ENCODE measurements at regions of chr3 and their contacts with region 1.

Region 1: DNA sequence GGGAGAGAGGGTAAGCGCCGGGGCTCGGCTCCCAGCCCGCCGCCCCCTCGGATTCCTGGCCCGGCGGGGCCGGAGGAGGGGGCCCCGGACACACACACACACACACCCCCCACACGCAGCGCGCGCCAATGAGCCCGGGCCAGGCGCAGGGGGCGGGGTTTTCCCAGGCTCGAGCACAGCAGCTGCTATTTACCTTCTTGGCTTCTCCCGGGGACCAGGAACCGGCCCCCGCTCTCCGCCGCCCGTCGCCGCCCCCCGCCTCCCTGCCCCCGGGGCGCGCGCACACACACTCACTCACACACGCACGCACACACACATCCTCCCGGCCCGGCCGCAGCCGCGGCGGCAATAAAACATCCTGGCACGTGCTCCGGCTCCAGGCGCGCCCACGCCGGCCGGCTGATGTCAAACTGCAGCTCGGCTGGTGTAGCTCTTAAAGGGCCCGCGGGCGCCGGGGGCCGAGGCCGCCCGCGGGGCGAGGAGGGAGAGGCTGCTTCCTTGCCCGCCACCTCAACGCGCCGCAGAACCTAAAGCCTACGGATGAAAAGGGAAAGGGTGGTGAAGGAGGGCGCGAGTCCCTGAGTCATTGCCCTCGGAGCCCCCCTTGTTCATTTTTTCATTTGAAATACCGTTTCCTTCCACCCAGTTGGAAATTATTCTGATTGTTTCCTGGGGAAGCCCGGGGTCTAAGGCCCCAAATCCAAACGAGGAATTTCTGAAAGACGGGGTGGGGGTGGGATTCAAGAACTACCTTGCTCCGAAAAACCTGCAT is 1.0 kb upstream of the HES1 start:
- DNase-seq: peak; percentile 92 to 97 (median 96)
- ATAC-seq: peak; percentile 72
- H3K4me3 ChIP-seq: peak overlapping the region; percentile 43 to 65
- H3K27ac ChIP-seq: peak overlapping the region; percentile 90 to 93
- H3K4me1 ChIP-seq: peaks cover 30 to 69% of the 10 kb centered on the region in 2 donors
- H3K27me3 ChIP-seq: peaks cover 0 to 97% of the 10 kb centered on the region in 2 donors
- CTCF ChIP-seq: no peak

Region 2: DNA sequence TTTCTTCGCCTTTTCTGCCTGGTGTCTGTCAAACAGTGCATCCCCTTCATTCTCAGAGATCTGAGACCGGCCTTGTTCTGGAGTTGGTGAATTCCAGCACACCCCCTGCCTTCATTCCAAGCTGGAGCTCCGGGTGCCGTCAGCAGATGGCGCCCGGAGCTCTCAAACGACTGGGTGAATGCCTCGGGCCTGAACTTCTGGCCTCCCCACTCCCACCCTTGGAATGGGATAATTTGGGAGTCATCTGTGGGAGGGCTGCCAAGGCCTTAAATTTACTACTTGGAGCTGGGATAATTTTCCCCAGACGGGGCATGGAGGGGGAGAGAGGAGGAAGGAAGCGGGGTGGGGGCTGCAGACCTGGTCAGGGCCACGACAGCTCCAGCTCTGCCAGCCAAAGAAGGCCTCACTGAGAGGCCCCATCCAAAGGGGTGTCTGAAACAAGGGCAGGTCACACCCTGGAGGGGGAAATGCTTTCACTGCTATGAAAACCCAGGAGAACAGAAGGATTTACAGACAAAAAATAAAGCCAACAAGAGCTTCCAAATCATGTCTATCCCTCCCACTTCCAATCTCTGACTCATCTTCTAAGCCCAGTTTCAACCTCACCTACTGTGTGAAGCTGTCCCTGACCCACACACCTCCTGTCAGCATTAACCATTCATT is 354.0 kb before region 1 on chr3:
- intact Hi-C with region 1: loop called in 1 of 2 experiments (anchors 5 kb)
- DNase-seq: peak in 3 of 4 donors; percentile 66 to 88 (median 72)
- ATAC-seq: peak; percentile 89
- H3K4me3 ChIP-seq: no peak overlapping the region
- H3K27ac ChIP-seq: no peak overlapping the region
- H3K4me1 ChIP-seq: peaks cover 6 to 11% of the 10 kb centered on the region in 2 donors
- H3K27me3 ChIP-seq: peaks cover 6 to 44% of the 10 kb centered on the region in 2 donors
- CTCF ChIP-seq: peak; percentile 65 to 73

Region 3: GRCh38 chr3:193791671-193792045 is 343.3 kb before region 1 on chr3:
- intact Hi-C with region 1: loop called in 1 of 2 experiments (anchors 5 kb)
- DNase-seq: peak in 2 of 4 donors; percentile 76 to 86
- ATAC-seq: peak; percentile 84
- H3K4me3 ChIP-seq: no peak overlapping the region
- H3K27ac ChIP-seq: peak overlapping the region in 1 of 2 donors; percentile 20
- H3K4me1 ChIP-seq: peaks cover 11 to 17% of the 10 kb centered on the region in 2 donors
- H3K27me3 ChIP-seq: peaks cover 0 to 5% of the 10 kb centered on the region in 2 donors
- CTCF ChIP-seq: no peak

Region 4: GRCh38 chr3:193982258-193982659 is 152.7 kb before region 1 on chr3:
- intact Hi-C with region 1: no loop called
- DNase-seq: peak in 2 of 4 donors; percentile 59 to 84
- ATAC-seq: peak; percentile 60
- H3K4me3 ChIP-seq: no peak overlapping the region
- H3K27ac ChIP-seq: no peak overlapping the region
- H3K4me1 ChIP-seq: peaks cover 7 to 24% of the 10 kb centered on the region in 2 donors
- H3K27me3 ChIP-seq: no peaks in the 10 kb centered on the region
- CTCF ChIP-seq: no peak

Region 5: GRCh38 chr3:194003125-194004057 is 131.6 kb before region 1 on chr3:
- intact Hi-C with region 1: loop called in 1 of 2 experiments (anchors 10 kb)
- DNase-seq: peak; percentile 57 to 95 (median 82)
- ATAC-seq: peak; percentile 91
- H3K4me3 ChIP-seq: peak overlapping the region; percentile 12 to 47
- H3K27ac ChIP-seq: peak overlapping the region; percentile 80 to 94
- H3K4me1 ChIP-seq: peaks cover 18 to 45% of the 10 kb centered on the region in 2 donors
- H3K27me3 ChIP-seq: peaks cover 0 to 19% of the 10 kb centered on the region in 2 donors
- CTCF ChIP-seq: no peak

Region 6: GRCh38 chr3:194023501-194024280 is 111.3 kb before region 1 on chr3:
- intact Hi-C with region 1: no loop called
- DNase-seq: no peak
- ATAC-seq: no peak
- H3K4me3 ChIP-seq: no peak overlapping the region
- H3K27ac ChIP-seq: no peak overlapping the region
- H3K4me1 ChIP-seq: no peaks in the 10 kb centered on the region
- H3K27me3 ChIP-seq: no peaks in the 10 kb centered on the region
- CTCF ChIP-seq: no peak

Region 7: DNA sequence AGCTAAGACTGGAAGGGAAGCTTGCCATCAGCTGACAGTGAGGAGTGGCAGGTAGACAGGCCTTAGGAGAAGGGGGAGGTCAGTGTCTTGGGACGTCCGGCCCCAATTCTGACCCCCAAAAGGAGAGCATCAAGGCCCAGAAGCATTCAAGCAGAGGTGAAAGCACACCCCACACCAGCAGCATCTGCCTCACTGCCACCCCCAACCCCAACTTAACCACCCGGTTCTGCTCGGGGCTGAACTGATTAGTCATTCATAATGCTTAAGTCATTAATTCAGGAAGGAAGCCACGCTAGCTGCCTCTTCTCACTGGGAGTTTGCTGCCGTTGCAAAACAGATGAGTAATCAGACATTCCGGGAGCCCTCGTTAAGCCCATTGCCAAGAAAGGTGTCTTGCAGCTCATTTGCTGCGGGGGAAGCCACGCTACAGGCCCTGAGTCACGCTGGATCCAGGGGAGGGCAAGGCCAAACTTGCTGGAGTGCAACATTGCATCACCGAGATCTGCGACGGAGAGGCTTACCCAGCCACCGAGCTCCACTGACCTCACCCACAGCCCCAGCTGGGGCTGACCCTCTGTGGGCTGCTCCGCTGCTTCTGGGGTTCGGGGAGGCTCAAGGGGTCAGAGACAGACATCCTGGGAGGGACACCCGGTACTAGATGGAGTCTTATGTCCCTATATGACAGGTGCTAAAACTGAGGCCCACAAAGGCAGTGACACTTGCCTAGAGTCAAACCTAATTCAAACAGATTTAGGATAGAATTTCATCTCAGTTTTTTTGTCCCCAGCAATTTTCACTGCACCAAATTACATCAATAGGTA is 45.4 kb before region 1 on chr3:
- intact Hi-C with region 1: loop called in 1 of 2 experiments (anchors 10 kb)
- DNase-seq: peak in 2 of 4 donors; percentile 92 to 95
- ATAC-seq: peak; percentile 91
- H3K4me3 ChIP-seq: no peak overlapping the region
- H3K27ac ChIP-seq: peak overlapping the region; percentile 42 to 89
- H3K4me1 ChIP-seq: peaks cover 12 to 29% of the 10 kb centered on the region in 2 donors
- H3K27me3 ChIP-seq: no peaks in the 10 kb centered on the region
- CTCF ChIP-seq: no peak

Region 8: GRCh38 chr3:194103983-194104751 is 30.8 kb before region 1 on chr3:
- intact Hi-C with region 1: no loop called
- DNase-seq: no peak
- ATAC-seq: no peak
- H3K4me3 ChIP-seq: no peak overlapping the region
- H3K27ac ChIP-seq: no peak overlapping the region
- H3K4me1 ChIP-seq: peaks cover 0 to 6% of the 10 kb centered on the region in 2 donors
- H3K27me3 ChIP-seq: no peaks in the 10 kb centered on the region
- CTCF ChIP-seq: no peak

Region 9: GRCh38 chr3:194265483-194265892 is 130.5 kb after region 1 on chr3:
- intact Hi-C with region 1: loop called in 1 of 2 experiments (anchors 5 kb)
- DNase-seq: peak; percentile 76 to 91 (median 84)
- ATAC-seq: peak; percentile 73
- H3K4me3 ChIP-seq: no peak overlapping the region
- H3K27ac ChIP-seq: peak overlapping the region; percentile 13 to 45
- H3K4me1 ChIP-seq: peaks cover 18 to 52% of the 10 kb centered on the region in 2 donors
- H3K27me3 ChIP-seq: no peaks in the 10 kb centered on the region
- CTCF ChIP-seq: no peak

Region 10: DNA sequence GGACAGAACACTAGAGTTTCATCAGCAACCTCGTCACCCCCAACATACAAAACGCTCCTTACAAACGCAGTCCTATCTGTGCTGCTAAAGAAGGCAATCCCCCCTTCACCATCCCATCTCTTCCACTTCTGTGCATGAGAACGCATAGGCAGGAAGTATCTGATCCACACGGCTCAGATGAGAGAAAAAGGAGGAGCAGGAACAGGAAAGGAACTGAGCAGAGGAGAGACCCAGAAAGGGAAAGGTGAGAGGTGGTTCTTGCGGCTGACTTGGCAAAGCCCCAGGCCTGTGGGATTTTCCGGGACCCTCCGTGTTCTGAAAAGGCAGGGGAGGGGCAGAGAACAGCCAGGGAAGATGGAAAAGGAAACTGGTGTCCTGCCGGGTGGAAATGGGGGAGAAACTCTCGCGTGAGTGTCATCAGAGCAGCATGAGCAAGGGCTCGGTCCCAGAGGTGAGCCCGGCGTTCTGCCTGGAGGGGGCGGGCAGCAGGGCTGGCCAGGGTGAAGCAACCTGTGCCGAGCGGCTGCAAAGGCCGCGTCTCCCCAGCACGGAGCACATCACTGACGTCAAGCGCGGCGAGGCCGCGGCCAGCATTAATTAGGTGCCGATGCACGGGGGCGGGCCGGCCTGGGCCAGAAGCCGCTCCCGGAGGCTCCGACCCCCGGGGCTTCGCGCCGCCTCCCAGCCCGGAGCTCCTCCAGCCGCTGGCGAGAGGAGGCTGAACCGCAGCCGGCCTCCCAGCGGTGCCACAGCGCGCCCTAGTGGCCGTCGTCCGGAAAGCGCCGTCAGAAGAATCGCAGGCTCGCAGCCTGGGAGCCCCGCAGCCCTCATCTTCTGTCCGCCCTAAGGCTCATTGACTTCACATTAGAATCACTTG is 180.4 kb after region 1 on chr3:
- intact Hi-C with region 1: loop called in 1 of 2 experiments (anchors 5 kb)
- DNase-seq: peak; percentile 80 to 97 (median 90)
- ATAC-seq: peak; percentile 93
- H3K4me3 ChIP-seq: peak overlapping the region; percentile 35 to 47
- H3K27ac ChIP-seq: peak overlapping the region; percentile 38 to 46
- H3K4me1 ChIP-seq: peaks cover 4 to 15% of the 10 kb centered on the region in 2 donors
- H3K27me3 ChIP-seq: peaks cover 0 to 58% of the 10 kb centered on the region in 2 donors
- CTCF ChIP-seq: peak; percentile 91 to 96

Region 11: GRCh38 chr3:194447161-194447560 is 312.2 kb after region 1 on chr3:
- intact Hi-C with region 1: no loop called
- DNase-seq: peak in 1 of 4 donors; percentile 15
- ATAC-seq: peak; percentile 86
- H3K4me3 ChIP-seq: no peak overlapping the region
- H3K27ac ChIP-seq: no peak overlapping the region
- H3K4me1 ChIP-seq: no peaks in the 10 kb centered on the region
- H3K27me3 ChIP-seq: no peaks in the 10 kb centered on the region
- CTCF ChIP-seq: no peak